ENCODE measurements at regions of chr10 and their contacts with region 1.

Region 1: GRCh38 chr10:22765660-22766547 is 51.5 kb upstream of the PIP4K2A start:
- DNase-seq: no peak
- ATAC-seq: no peak
- H3K4me3 ChIP-seq: no peak overlapping the region
- H3K4me3 Mint-ChIP-seq: no peak overlapping the region
- H3K27ac ChIP-seq: no peak overlapping the region
- H3K27ac Mint-ChIP-seq: no peak overlapping the region
- H3K4me1 ChIP-seq: no peaks in the 10 kb centered on the region
- H3K4me1 Mint-ChIP-seq: peaks cover 0 to 5% (median 0%) of the 10 kb centered on the region in 3 donors
- H3K27me3 ChIP-seq: no peaks in the 10 kb centered on the region
- H3K27me3 Mint-ChIP-seq: peaks cover 0 to 4% of the 10 kb centered on the region in 2 donors

Region 2: GRCh38 chr10:22673785-22674572 is 91.9 kb before region 1 on chr10:
- CTCF ChIA-PET with region 1: no interaction called
- POLR2A ChIA-PET with region 1: interaction called in 1 of 2 experiments, 12 read pairs
- DNase-seq: no peak
- ATAC-seq: no peak
- H3K4me3 ChIP-seq: no peak overlapping the region
- H3K4me3 Mint-ChIP-seq: peak overlapping the region in 1 of 3 donors; percentile 5
- H3K27ac ChIP-seq: peak overlapping the region; percentile 17
- H3K27ac Mint-ChIP-seq: peak overlapping the region; percentile 86 to 88
- H3K4me1 ChIP-seq: peaks cover 66 to 84% of the 10 kb centered on the region in 2 experiments
- H3K4me1 Mint-ChIP-seq: peaks cover 89 to 96% (median 93%) of the 10 kb centered on the region in 3 donors
- H3K27me3 ChIP-seq: no peaks in the 10 kb centered on the region
- H3K27me3 Mint-ChIP-seq: no peaks in the 10 kb centered on the region

Region 3: GRCh38 chr10:22736134-22736533 is 29.8 kb before region 1 on chr10:
- CTCF ChIA-PET with region 1: no interaction called
- POLR2A ChIA-PET with region 1: no interaction called
- DNase-seq: no peak
- ATAC-seq: no peak
- H3K4me3 ChIP-seq: no peak overlapping the region
- H3K4me3 Mint-ChIP-seq: no peak overlapping the region
- H3K27ac ChIP-seq: no peak overlapping the region
- H3K27ac Mint-ChIP-seq: no peak overlapping the region
- H3K4me1 ChIP-seq: no peaks in the 10 kb centered on the region
- H3K4me1 Mint-ChIP-seq: no peaks in the 10 kb centered on the region
- H3K27me3 ChIP-seq: peaks cover 0 to 3% of the 10 kb centered on the region in 2 experiments
- H3K27me3 Mint-ChIP-seq: peaks cover 0 to 4% of the 10 kb centered on the region in 2 donors

Region 4: GRCh38 chr10:22831586-22831985 is 65.7 kb after region 1 on chr10:
- CTCF ChIA-PET with region 1: no interaction called
- POLR2A ChIA-PET with region 1: no interaction called
- DNase-seq: no peak
- ATAC-seq: no peak
- H3K4me3 ChIP-seq: no peak overlapping the region
- H3K4me3 Mint-ChIP-seq: no peak overlapping the region
- H3K27ac ChIP-seq: no peak overlapping the region
- H3K27ac Mint-ChIP-seq: no peak overlapping the region
- H3K4me1 ChIP-seq: no peaks in the 10 kb centered on the region
- H3K4me1 Mint-ChIP-seq: no peaks in the 10 kb centered on the region
- H3K27me3 ChIP-seq: peaks cover 0 to 3% of the 10 kb centered on the region in 2 experiments
- H3K27me3 Mint-ChIP-seq: peaks cover 0 to 4% of the 10 kb centered on the region in 2 donors